ENCODE measurements at regions of chr12 and their contacts with region 1.

Region 1: DNA sequence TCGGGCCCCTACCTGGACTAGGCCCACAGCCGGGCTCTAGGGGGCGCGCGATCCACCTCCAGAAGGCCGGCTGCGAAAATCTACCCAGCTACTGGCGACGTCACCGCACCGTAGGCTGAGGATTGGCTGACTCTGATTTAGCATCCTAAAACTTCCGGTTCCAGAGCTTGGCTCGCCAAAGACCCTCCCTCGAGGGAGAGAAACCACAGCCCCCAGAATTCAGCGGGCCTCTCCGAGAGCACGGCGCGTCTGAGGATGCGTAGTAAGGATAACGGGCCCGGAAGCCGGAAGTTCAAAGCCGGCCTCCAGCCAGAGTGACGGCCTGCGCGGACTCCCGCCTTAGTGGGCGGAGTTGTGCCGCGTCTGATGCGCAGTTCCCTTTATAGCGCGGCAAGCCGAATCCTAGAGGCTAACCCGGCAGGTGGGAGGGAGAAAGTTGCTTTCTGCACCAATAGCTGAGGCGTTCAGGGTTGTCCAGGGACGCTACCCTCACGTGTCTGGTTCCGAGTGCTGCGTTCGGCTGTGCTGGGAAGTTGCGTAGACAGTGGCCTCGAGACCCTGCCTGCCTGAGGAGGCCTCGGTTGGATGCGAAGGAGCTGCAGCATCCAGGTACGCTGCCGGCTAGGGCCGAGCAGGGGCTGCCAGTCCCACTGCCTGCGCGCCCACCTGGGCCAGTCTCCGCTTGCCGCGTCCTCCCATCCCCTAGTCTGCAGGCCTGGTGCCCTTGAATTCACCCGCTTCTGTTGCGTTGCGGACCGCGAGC is at the start of gene COX14:
- DNase-seq: peak; percentile 97 to 100 (median 99)
- ATAC-seq: peak; percentile 83
- H3K4me3 ChIP-seq: peak within 1 kb of the TSS; percentile 100
- H3K4me3 Mint-ChIP-seq: peak within 1 kb of the TSS; percentile 95
- H3K27ac ChIP-seq: peak within 1 kb of the TSS; percentile 87 to 97
- H3K27ac Mint-ChIP-seq: peak within 1 kb of the TSS; percentile 96
- H3K4me1 ChIP-seq: peaks cover 55% of the 10 kb centered on the region
- H3K4me1 Mint-ChIP-seq: peaks cover 39% of the 10 kb centered on the region
- H3K27me3 ChIP-seq: no peaks in the 10 kb centered on the region
- H3K27me3 Mint-ChIP-seq: no peaks in the 10 kb centered on the region
- CTCF ChIP-seq: peak; percentile 97
- total RNA-seq, gene COX14: 51.1 to 52.8 TPM

Region 2: DNA sequence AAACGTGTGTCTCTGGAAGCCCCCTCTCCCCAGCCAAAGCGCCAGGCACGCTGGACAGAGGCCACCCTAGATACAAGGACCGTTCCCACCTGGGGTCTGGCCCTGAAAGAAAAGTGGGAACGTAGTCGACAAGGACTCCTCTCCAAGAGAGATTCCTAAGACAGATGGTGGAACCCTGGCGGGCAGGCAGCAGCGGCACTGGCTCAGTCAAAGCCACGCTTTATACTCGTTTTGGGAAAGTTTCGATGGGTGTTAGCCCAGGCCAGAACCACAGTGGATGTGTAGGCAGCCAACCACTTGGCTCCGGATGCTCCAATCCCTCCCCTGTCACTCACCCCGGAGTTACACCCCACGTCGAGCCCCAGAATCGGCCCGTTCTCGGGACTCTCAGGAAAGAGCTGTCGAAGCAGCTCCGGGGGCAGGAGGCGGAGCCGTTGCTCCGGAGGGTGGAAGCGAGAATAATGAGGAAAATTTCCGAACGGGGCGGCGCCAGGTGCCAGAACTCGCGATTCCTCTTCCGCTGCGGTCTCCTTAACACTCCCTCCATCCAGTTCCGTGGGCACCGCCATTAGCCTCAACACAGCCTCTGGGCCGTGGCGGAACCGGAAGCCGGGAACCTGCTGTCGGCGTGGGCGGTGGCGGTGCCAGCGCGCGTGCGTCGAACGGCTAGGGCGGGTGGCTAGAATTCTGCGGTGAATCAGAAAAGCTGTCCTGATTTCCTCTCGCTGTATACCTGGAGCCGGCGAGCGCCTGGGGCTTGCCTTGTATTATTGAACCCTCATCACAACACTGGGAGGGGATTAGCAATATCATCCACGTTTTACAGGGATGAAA is 269.1 kb before region 1 on chr12 and contains the start of gene BCDIN3D:
- CTCF ChIA-PET with region 1: no interaction called
- POLR2A ChIA-PET with region 1: interaction called, 10 read pairs
- intact Hi-C with region 1: no loop called
- DNase-seq: peak; percentile 86 to 97 (median 90)
- ATAC-seq: peak; percentile 90
- H3K4me3 ChIP-seq: peak within 1 kb of the TSS; percentile 83
- H3K4me3 Mint-ChIP-seq: peak within 1 kb of the TSS; percentile 90
- H3K27ac ChIP-seq: peak within 1 kb of the TSS; percentile 80 to 85
- H3K27ac Mint-ChIP-seq: peak within 1 kb of the TSS; percentile 88
- H3K4me1 ChIP-seq: peaks cover 34% of the 10 kb centered on the region
- H3K4me1 Mint-ChIP-seq: peaks cover 43% of the 10 kb centered on the region
- H3K27me3 ChIP-seq: no peaks in the 10 kb centered on the region
- H3K27me3 Mint-ChIP-seq: no peaks in the 10 kb centered on the region
- CTCF ChIP-seq: no peak
- total RNA-seq, gene BCDIN3D: 2.8 to 3.9 TPM

Region 3: DNA sequence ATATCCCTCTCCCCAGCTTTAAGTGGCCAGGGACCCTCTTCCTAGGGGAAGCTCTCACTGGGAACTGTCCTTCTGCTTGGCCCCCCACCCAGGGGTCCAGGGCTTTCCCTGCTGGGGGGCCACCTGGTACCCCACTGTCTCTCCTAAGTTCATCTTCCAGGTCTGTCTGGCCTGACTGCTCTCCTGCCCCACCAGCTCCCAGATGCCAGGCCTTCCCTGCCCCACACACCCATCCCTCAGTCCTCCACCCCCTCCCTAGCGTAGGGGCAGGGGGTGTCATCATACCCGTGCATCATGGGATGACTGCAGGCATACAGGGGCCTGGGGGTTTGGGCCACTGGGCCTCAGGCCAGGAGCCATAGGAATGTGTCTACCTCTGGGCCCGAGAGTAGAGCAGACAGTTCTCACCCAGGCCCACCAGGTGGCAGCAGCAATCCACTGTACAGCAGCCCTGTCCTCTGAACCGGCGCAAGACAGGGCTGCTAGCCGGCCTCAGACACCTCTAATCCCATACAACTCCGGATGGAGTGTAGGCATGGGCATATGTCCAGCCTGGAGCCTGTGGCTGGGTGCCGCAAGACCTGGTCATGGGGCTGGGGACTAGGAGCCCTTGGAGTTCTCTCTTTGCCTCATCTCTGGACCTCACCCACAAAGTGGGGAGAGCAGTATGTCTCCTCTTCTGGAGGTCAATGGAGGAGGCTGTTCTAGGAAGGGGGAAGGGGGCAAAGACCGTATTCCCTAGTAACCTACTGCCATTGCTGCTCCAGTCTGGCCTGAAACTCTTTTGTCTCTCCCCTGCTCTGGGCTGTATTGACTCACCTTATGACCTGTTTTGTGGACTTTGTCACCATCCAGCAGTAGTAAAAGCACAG is 36.7 kb before region 1 on chr12:
- CTCF ChIA-PET with region 1: interaction called, 6 read pairs
- POLR2A ChIA-PET with region 1: interaction called, 5 read pairs
- intact Hi-C with region 1: loop called in 1 of 2 experiments (anchors 5 kb)
- DNase-seq: peak; percentile 63 to 88 (median 77)
- ATAC-seq: peak; percentile 95
- H3K4me3 ChIP-seq: no peak overlapping the region
- H3K4me3 Mint-ChIP-seq: no peak overlapping the region
- H3K27ac ChIP-seq: no peak overlapping the region
- H3K27ac Mint-ChIP-seq: no peak overlapping the region
- H3K4me1 ChIP-seq: peaks cover 13% of the 10 kb centered on the region
- H3K4me1 Mint-ChIP-seq: peaks cover 7% of the 10 kb centered on the region
- H3K27me3 ChIP-seq: no peaks in the 10 kb centered on the region
- H3K27me3 Mint-ChIP-seq: peaks cover 5% of the 10 kb centered on the region
- CTCF ChIP-seq: peak; percentile 82

Region 4: DNA sequence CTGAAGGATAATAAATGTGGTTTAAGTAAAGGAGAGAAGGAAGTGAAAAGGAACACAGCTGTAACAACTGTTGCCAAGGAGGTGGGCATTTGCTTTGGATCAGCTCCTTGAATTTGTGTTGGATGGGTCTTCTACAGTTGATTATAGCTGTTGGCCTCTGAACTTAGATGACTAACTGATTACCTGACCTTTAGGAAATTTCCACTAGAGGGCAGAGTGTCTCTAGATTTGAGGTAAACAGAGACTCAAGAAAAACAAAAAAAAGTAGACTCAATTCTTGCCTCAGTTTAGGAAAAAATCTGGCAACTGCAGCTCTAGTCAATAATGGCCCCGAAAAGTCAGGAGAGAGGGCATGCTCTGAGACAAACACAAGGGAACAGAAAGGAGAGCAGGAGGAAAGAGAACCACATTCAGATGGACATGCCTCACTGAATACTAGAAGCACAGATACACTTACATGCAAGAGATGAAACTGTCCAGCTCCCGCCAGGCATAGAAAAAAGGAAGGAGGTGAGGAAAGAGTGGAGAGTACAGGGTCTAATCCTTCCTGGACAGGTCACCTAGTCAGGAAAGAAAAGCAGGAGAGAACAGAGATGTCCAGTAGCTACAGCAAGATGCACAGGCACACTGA is 20.7 kb after region 1 on chr12:
- CTCF ChIA-PET with region 1: interaction called, 28 read pairs
- POLR2A ChIA-PET with region 1: interaction called, 39 read pairs
- intact Hi-C with region 1: loop called in 1 of 2 experiments (anchors 1 kb)
- DNase-seq: peak in 3 of 14 experiments; percentile 61 to 70 (median 63)
- ATAC-seq: peak; percentile 65
- H3K4me3 ChIP-seq: no peak overlapping the region
- H3K4me3 Mint-ChIP-seq: no peak overlapping the region
- H3K27ac ChIP-seq: no peak overlapping the region
- H3K27ac Mint-ChIP-seq: peak overlapping the region; percentile 16
- H3K4me1 ChIP-seq: no peaks in the 10 kb centered on the region
- H3K4me1 Mint-ChIP-seq: peaks cover 16% of the 10 kb centered on the region
- H3K27me3 ChIP-seq: no peaks in the 10 kb centered on the region
- H3K27me3 Mint-ChIP-seq: no peaks in the 10 kb centered on the region
- CTCF ChIP-seq: peak; percentile 82

Region 5: GRCh38 chr12:50211392-50212070 is 99.7 kb after region 1 on chr12:
- CTCF ChIA-PET with region 1: no interaction called
- POLR2A ChIA-PET with region 1: interaction called, 15 read pairs
- intact Hi-C with region 1: no loop called
- DNase-seq: peak in 3 of 14 experiments; percentile 14 to 49 (median 38)
- ATAC-seq: peak; percentile 34
- H3K4me3 ChIP-seq: no peak overlapping the region
- H3K4me3 Mint-ChIP-seq: peak overlapping the region; percentile 47
- H3K27ac ChIP-seq: peak overlapping the region; percentile 51 to 80
- H3K27ac Mint-ChIP-seq: peak overlapping the region; percentile 90
- H3K4me1 ChIP-seq: peaks cover 34% of the 10 kb centered on the region
- H3K4me1 Mint-ChIP-seq: peaks cover 42% of the 10 kb centered on the region
- H3K27me3 ChIP-seq: no peaks in the 10 kb centered on the region
- H3K27me3 Mint-ChIP-seq: no peaks in the 10 kb centered on the region
- CTCF ChIP-seq: no peak

Region 6: DNA sequence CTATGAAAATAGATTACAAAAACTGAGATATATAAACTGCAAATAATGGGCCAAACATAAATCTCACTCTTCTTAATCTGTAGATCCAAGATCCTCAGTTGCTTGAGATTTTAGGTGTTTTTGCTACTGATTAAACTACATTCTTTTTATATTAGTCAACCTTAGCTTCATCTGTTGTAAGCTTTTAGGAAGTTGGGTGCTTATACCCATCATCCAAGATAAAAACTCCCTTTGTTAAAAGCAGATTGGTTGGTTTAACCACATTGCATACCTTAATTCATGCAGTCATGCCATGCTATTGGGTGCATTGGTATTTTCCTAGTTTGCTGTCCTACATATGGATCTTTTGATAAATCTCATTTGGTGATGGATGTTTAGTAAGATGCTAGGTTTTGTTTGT is 346.7 kb after region 1 on chr12:
- CTCF ChIA-PET with region 1: no interaction called
- POLR2A ChIA-PET with region 1: no interaction called
- intact Hi-C with region 1: no loop called
- DNase-seq: no peak
- ATAC-seq: no peak
- H3K4me3 ChIP-seq: no peak overlapping the region
- H3K4me3 Mint-ChIP-seq: no peak overlapping the region
- H3K27ac ChIP-seq: no peak overlapping the region
- H3K27ac Mint-ChIP-seq: no peak overlapping the region
- H3K4me1 ChIP-seq: no peaks in the 10 kb centered on the region
- H3K4me1 Mint-ChIP-seq: no peaks in the 10 kb centered on the region
- H3K27me3 ChIP-seq: no peaks in the 10 kb centered on the region
- H3K27me3 Mint-ChIP-seq: no peaks in the 10 kb centered on the region
- CTCF ChIP-seq: no peak

Measured in CD4-positive, alpha-beta T cell (primary cell).